Motor neuron (in vitro differentiated cells): ENCODE measurements at regions of chr11 and their contacts with region 1.

Region 1: GRCh38 chr11:72585762-72586311 is 88.4 kb downstream of the PDE2A start:
- ATAC-seq: peak; percentile 38 to 79 (median 60)
- H3K4me3 ChIP-seq: no peak overlapping the region
- H3K27ac ChIP-seq: no peak overlapping the region
- H3K4me1 ChIP-seq: peaks cover 0 to 4% of the 10 kb centered on the region in 2 donors

Region 2: GRCh38 chr11:72471005-72471898 is 114.6 kb before region 1 on chr11:
- in situ Hi-C with region 1: loop called in 1 of 9 experiments (anchors 10 kb)
- ATAC-seq: peak; percentile 80 to 96 (median 91)
- H3K4me3 ChIP-seq: no peak overlapping the region
- H3K27ac ChIP-seq: no peak overlapping the region
- H3K4me1 ChIP-seq: peaks cover 9 to 11% of the 10 kb centered on the region in 2 donors

Region 3: GRCh38 chr11:72642884-72643511 is 57.2 kb after region 1 on chr11:
- in situ Hi-C with region 1: loop called in 2 of 9 experiments (anchors 10 kb)
- ATAC-seq: peak; percentile 74 to 84 (median 80)
- H3K4me3 ChIP-seq: peak overlapping the region; percentile 13 to 30 (median 22)
- H3K27ac ChIP-seq: no peak overlapping the region
- H3K4me1 ChIP-seq: peaks cover 0 to 3% of the 10 kb centered on the region in 2 donors

Region 4: DNA sequence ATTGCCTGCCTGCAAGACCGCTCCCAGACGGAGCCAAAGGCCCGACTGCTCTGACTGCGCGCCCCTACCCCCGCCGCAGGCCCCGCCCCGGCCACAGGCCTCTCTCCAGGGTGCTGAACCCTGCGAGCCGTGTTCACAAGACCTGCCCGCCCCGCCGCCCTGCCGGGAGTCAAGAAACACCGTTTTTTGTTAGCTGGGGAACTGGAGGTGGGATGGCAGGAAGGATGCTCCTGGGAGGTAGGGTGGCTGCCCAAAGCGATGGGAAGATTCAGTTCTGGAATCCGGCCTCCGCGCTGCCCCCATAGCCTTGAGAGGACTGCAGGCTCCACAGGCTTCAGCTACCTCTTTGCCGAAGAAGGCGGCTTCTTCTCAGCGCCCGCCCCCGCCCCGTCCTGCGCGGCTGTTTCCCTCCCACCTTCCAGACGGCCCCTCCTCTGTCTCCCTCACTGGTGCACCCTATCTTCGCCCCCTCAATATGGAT is 91.1 kb after region 1 on chr11:
- in situ Hi-C with region 1: loop called in 7 of 9 experiments (anchors 10 to 25 kb)
- ATAC-seq: peak; percentile 24 to 85 (median 41)
- H3K4me3 ChIP-seq: no peak overlapping the region
- H3K27ac ChIP-seq: no peak overlapping the region
- H3K4me1 ChIP-seq: peaks cover 41 to 53% of the 10 kb centered on the region in 2 donors

Region 5: DNA sequence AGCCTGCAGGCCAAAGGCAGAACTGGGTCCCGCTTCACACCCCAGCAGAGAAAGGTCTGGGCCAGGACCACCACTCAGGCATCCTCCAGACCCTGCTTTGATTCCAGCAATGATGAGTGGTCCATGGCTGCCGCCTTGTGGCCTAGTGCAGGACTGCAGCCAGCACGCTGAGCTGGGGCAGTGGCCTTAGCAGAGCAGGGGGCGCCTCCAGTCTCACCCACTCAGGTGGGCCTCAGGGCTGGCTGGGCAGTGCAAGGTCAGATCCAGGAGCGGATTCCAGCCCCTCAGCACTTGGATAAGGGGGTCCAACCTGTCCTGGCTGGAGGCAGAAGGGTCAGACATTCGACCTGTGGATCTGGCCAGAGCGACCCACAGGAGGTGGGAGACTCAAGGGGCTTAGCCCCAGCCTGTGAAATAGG is 98.0 kb after region 1 on chr11:
- in situ Hi-C with region 1: loop called in 7 of 9 experiments (anchors 10 to 25 kb)
- ATAC-seq: peak; percentile 2 to 75 (median 68)
- H3K4me3 ChIP-seq: no peak overlapping the region
- H3K27ac ChIP-seq: no peak overlapping the region
- H3K4me1 ChIP-seq: peaks cover 14 to 25% of the 10 kb centered on the region in 2 donors